Activated B cell treated with CpG ODN at 0.5 μM for 24 hours (primary cell): ENCODE measurements at regions of chr1 and their contacts with region 1.

Region 1: DNA sequence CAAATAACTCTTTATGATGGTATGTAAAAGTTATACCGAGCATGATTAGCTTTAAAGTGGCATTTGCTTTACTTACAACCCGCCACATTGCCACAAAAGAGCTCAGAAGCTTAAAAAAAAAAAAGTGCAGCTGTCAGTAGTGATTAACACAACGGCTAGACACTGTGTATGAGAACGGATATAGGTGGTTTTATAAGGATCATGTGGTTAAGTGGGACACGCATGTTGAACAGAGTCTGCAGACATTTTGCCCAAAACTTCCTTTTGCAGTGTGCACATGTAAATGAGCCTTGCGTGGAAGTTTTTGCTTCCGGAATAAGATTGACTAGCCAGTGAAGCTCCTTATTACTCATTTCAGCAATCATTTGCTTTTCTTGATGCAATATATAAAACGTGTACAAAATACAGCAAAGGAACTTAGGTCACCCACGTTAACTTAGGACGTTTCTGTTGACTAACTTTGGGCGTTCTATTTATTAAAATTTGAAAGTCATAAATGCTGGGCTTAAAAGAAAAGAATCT is 58.7 kb upstream of the RGS1 start:
- DNase-seq: peak; percentile 23
- ATAC-seq: peak; percentile 96
- H3K4me3 Mint-ChIP-seq: peak overlapping the region; percentile 75
- H3K27ac Mint-ChIP-seq: peak overlapping the region; percentile 65
- H3K4me1 Mint-ChIP-seq: peaks cover 59% of the 10 kb centered on the region
- H3K27me3 Mint-ChIP-seq: no peaks in the 10 kb centered on the region
- CTCF ChIP-seq: no peak

Region 2: DNA sequence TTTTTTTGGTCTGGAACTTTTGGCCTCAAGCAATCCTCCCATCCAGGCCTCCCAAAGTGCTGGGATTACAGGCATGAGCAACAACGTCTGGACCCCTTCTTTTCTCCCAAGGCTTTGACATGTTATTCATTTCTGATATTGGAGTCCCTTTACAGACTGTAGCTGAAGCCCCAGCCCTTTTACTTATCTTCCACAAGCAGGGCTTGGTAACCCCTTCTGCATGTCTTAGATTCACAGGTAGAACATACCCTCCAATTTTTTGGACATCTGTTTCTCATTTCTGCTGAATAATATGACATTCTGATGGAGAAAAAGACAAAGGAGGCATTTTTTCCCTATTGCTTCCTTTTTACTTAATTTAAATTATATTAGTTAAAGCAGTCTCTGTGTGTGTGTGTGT is 239.2 kb before region 1 on chr1:
- CTCF ChIA-PET with region 1: no interaction called
- POLR2A ChIA-PET with region 1: no interaction called
- intact Hi-C with region 1: no loop called
- DNase-seq: no peak
- ATAC-seq: no peak
- H3K4me3 Mint-ChIP-seq: no peak overlapping the region
- H3K27ac Mint-ChIP-seq: no peak overlapping the region
- H3K4me1 Mint-ChIP-seq: no peaks in the 10 kb centered on the region
- H3K27me3 Mint-ChIP-seq: no peaks in the 10 kb centered on the region
- CTCF ChIP-seq: no peak

Region 3: DNA sequence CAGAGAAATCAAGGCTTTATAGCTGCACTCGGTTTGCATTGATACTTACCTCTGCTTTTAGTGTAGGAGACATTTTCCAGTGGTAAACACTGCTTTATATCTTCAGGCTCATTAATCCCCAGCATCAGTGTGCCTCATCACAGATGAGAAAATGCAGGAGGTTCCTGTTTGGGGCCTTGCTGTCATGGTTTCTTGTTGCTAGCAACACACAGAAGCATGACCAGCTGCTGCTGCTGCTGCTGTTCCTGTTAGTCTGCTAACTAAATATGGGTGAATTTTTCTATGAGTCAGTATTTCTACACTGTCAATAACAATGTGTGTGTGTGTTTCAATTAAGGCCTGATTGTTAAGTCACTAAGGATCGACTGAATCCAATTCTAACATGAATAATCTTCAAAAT is 27.1 kb before region 1 on chr1:
- CTCF ChIA-PET with region 1: no interaction called
- POLR2A ChIA-PET with region 1: no interaction called
- intact Hi-C with region 1: loop called (anchors 2 kb)
- DNase-seq: no peak
- ATAC-seq: peak; percentile 75
- H3K4me3 Mint-ChIP-seq: no peak overlapping the region
- H3K27ac Mint-ChIP-seq: no peak overlapping the region
- H3K4me1 Mint-ChIP-seq: peaks cover 6% of the 10 kb centered on the region
- H3K27me3 Mint-ChIP-seq: peaks cover 5% of the 10 kb centered on the region
- CTCF ChIP-seq: no peak

Region 4: GRCh38 chr1:192530254-192530653 is 13.4 kb after region 1 on chr1:
- CTCF ChIA-PET with region 1: interaction called, 4 read pairs
- POLR2A ChIA-PET with region 1: interaction called, 3 read pairs
- intact Hi-C with region 1: loop called (anchors 1 kb)
- DNase-seq: no peak
- ATAC-seq: peak; percentile 98
- H3K4me3 Mint-ChIP-seq: peak overlapping the region; percentile 60
- H3K27ac Mint-ChIP-seq: peak overlapping the region; percentile 65
- H3K4me1 Mint-ChIP-seq: peaks cover 23% of the 10 kb centered on the region
- H3K27me3 Mint-ChIP-seq: no peaks in the 10 kb centered on the region
- CTCF ChIP-seq: no peak

Region 5: DNA sequence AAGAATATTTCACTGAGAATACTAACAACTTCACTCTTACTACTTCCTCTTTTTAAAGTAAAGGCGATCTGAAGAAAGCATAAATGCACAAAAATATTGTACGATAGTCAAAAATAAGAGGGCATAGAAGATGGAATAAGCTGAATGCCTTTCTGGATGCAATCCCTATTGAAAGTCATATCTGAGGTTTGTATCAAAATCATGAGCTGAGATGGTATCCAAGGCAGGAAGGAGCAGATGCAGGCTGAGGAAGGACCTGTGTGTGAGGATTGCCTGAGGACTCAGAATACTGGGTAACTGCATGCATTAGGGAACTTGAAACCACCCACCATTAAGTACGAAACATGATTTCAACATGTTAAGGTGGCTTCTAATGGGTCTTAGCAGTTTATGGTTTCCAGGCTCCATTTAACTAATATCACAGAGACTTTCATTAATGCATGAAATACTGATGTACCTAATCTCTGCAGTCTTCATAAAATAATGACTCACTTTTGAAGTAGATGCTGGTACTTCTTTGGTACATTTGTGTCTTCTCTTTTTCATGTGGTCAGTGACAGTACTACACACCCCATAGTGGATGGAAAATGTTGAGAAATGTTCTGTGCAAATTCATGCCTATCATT is 29.2 kb after region 1 on chr1:
- CTCF ChIA-PET with region 1: interaction called, 8 read pairs
- POLR2A ChIA-PET with region 1: interaction called, 46 read pairs
- intact Hi-C with region 1: loop called (anchors 1 kb)
- DNase-seq: no peak
- ATAC-seq: peak; percentile 66
- H3K4me3 Mint-ChIP-seq: peak overlapping the region; percentile 65
- H3K27ac Mint-ChIP-seq: peak overlapping the region; percentile 84
- H3K4me1 Mint-ChIP-seq: peaks cover 60% of the 10 kb centered on the region
- H3K27me3 Mint-ChIP-seq: no peaks in the 10 kb centered on the region
- CTCF ChIP-seq: no peak

Region 6: DNA sequence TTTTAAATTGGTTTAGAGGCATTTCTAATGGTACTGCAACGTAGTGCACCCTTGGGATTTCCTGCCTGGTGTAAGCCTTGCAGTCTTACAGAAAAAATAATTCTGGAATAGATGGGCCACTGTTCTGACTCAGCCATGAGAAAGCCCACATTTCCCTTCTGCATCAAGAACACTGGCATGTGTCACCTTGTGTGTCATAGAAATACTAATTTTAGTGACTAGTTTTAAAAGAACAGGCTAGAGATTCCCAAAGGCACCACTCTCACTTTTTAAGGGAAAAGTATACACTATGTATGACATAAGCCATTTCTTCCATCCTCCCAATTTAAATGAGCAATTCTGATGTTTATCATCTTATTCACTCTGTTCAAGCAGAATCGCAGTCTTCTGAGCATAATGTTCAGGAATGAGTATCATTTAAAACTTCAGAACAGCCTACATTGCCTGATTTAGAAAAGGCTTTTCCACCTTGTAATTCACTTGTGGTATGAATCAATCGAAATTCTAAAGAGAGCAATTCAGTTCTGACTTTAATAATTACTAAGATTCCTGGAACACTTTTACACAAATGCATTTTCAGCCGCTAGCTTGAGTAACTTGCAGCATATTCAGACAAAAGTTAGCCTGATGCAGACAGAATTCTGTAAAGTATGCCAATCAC is 137.9 kb after region 1 on chr1:
- CTCF ChIA-PET with region 1: no interaction called
- POLR2A ChIA-PET with region 1: no interaction called
- intact Hi-C with region 1: no loop called
- DNase-seq: no peak
- ATAC-seq: no peak
- H3K4me3 Mint-ChIP-seq: no peak overlapping the region
- H3K27ac Mint-ChIP-seq: no peak overlapping the region
- H3K4me1 Mint-ChIP-seq: no peaks in the 10 kb centered on the region
- H3K27me3 Mint-ChIP-seq: no peaks in the 10 kb centered on the region
- CTCF ChIP-seq: no peak

Region 7: GRCh38 chr1:193059268-193060225 is 542.7 kb after region 1 on chr1 and contains the starts of genes RO60 and UCHL5:
- CTCF ChIA-PET with region 1: no interaction called
- POLR2A ChIA-PET with region 1: no interaction called
- intact Hi-C with region 1: loop called (anchors 2 kb)
- DNase-seq: peak; percentile 85
- ATAC-seq: peak; percentile 94
- H3K4me3 Mint-ChIP-seq: peak within 1 kb of the TSS; percentile 100
- H3K27ac Mint-ChIP-seq: peak within 1 kb of the TSS; percentile 99
- H3K4me1 Mint-ChIP-seq: peaks cover 54% of the 10 kb centered on the region
- H3K27me3 Mint-ChIP-seq: no peaks in the 10 kb centered on the region
- CTCF ChIP-seq: no peak
- total RNA-seq, gene RO60: 55.9 and 61.1 TPM in 2 replicates
- total RNA-seq, gene UCHL5: 32.3 and 36.4 TPM in 2 replicates

Region 8: DNA sequence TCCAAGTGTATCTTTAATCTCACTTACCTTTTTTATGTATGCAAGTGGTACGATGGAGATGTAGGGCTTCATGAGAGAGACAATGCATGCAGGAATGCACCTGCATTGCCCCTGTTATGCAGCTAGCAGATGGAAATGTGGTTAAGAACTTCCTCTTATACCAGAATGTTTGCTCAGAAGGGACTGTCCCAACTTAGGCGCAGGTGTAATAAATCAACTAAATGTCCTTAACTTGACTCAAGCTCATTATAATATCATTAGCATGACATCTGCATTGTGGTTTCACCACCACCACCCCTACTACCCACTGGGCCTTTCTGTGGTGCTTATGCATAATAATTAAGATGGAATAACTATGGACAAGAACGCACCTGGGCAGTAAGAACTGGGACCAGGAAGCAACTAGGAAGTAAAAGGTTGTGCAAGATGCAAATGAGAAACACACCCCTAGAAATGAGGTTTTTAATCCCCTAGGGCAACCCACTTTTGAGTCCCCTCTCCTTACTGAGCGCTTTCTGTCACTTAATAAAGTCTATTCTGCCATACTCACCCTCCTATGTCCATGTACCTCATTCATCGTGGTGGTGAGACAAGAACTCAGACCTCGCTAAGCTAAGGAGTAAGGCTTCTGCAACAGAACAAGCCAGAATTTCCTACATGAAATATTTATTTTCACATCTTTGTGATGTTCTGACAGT is 1772.9 kb after region 1 on chr1:
- CTCF ChIA-PET with region 1: no interaction called
- POLR2A ChIA-PET with region 1: no interaction called
- intact Hi-C with region 1: loop called (anchors 5 kb)
- DNase-seq: peak; percentile 35
- ATAC-seq: peak; percentile 91
- H3K4me3 Mint-ChIP-seq: peak overlapping the region; percentile 38
- H3K27ac Mint-ChIP-seq: peak overlapping the region; percentile 77
- H3K4me1 Mint-ChIP-seq: peaks cover 23% of the 10 kb centered on the region
- H3K27me3 Mint-ChIP-seq: peaks cover 3% of the 10 kb centered on the region
- CTCF ChIP-seq: no peak